CD4-positive, alpha-beta T cell (primary cell): ENCODE measurements at regions of chr6 and their contacts with region 1.

Region 1: GRCh38 chr6:52284460-52285176 is at the start of gene MCM3:
- DNase-seq: peak; percentile 86 to 99 (median 92)
- ATAC-seq: peak; percentile 92
- H3K4me3 ChIP-seq: peak within 1 kb of the TSS; percentile 57
- H3K4me3 Mint-ChIP-seq: peak within 1 kb of the TSS; percentile 60
- H3K27ac ChIP-seq: peak within 1 kb of the TSS; percentile 51 to 59
- H3K27ac Mint-ChIP-seq: peak within 1 kb of the TSS; percentile 34
- H3K4me1 ChIP-seq: peaks cover 29% of the 10 kb centered on the region
- H3K4me1 Mint-ChIP-seq: peaks cover 49% of the 10 kb centered on the region
- H3K27me3 ChIP-seq: no peaks in the 10 kb centered on the region
- H3K27me3 Mint-ChIP-seq: no peaks in the 10 kb centered on the region
- CTCF ChIP-seq: no peak
- total RNA-seq, gene MCM3: 9.3 to 10.1 TPM

Region 2: DNA sequence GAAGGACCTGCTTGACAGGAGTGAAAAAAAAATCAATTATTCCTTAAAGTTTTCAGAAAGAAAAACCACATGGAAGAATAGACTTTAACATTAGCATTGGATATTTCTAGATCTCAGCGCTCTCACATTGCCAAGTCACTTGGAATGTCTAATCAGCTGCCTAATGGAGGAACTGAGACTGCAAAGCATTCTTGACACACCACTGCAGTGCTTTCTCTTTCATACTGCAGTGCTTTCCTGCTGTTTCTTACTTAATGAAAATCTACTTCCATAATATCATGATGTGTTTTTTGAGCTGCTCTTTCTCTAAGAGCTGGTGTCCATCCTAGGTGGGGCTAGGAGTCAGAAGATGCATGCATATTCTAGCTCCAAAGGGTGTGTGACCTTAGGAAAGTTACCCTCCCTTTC is 20.4 kb after region 1 on chr6:
- CTCF ChIA-PET with region 1: interaction called, 7 read pairs
- POLR2A ChIA-PET with region 1: interaction called, 44 read pairs
- intact Hi-C with region 1: loop called (anchors 2 kb)
- DNase-seq: peak in 3 of 14 experiments; percentile 45 to 52 (median 46)
- ATAC-seq: peak; percentile 25
- H3K4me3 ChIP-seq: peak overlapping the region; percentile 10
- H3K4me3 Mint-ChIP-seq: peak overlapping the region; percentile 80
- H3K27ac ChIP-seq: peak overlapping the region; percentile 64 to 89
- H3K27ac Mint-ChIP-seq: peak overlapping the region; percentile 92
- H3K4me1 ChIP-seq: peaks cover 71% of the 10 kb centered on the region
- H3K4me1 Mint-ChIP-seq: peaks cover 80% of the 10 kb centered on the region
- H3K27me3 ChIP-seq: no peaks in the 10 kb centered on the region
- H3K27me3 Mint-ChIP-seq: no peaks in the 10 kb centered on the region
- CTCF ChIP-seq: no peak

Region 3: GRCh38 chr6:52361945-52362442 is 77.4 kb after region 1 on chr6 and contains the start of gene PAQR8:
- CTCF ChIA-PET with region 1: interaction called, 21 read pairs
- POLR2A ChIA-PET with region 1: interaction called, 110 read pairs
- intact Hi-C with region 1: loop called (anchors 2 to 5 kb)
- DNase-seq: peak; percentile 67 to 93 (median 78)
- ATAC-seq: peak; percentile 84
- H3K4me3 ChIP-seq: peak within 1 kb of the TSS; percentile 80
- H3K4me3 Mint-ChIP-seq: peak within 1 kb of the TSS; percentile 98
- H3K27ac ChIP-seq: peak within 1 kb of the TSS; percentile 81 to 88
- H3K27ac Mint-ChIP-seq: peak within 1 kb of the TSS; percentile 92
- H3K4me1 ChIP-seq: peaks cover 29% of the 10 kb centered on the region
- H3K4me1 Mint-ChIP-seq: peaks cover 53% of the 10 kb centered on the region
- H3K27me3 ChIP-seq: no peaks in the 10 kb centered on the region
- H3K27me3 Mint-ChIP-seq: no peaks in the 10 kb centered on the region
- CTCF ChIP-seq: no peak
- total RNA-seq, gene PAQR8: 1.8 to 1.9 TPM

Region 4: DNA sequence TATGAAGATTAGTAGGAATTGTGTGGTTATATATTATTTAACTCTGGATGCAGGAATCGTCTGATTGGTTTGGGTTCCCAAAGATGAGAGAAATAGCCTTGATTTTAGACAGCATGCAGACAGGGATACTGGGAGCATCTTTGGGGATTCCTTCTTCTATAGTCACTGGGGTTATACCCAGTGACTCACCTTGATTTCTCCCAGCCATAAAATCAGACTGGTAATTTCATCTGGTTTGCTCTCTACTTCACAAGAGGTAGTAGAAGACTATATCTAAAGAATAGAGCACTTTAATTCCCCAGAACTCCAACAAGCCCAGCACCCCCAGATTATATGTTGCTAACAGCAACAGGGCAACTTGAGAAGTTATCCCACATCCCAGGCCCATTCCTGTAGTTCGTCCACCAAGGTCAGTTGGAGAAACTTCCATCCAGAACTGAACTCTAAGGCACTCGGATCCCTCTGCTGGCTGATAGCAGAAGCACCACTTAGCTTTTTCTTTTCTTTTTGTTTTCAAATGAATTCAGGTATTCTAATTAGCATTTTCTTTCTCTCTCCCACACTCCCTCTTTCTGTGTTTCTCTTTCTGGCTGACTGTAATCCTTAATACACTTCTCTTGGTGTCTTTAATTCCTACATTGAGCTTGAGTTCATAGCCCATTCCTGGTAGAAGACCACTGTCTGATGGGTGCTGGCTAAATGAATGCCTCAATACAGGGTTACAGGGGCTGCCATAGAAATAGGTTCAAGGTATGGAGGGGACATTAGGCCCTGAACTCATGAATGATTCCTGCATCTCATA is 115.1 kb after region 1 on chr6:
- CTCF ChIA-PET with region 1: interaction called, 45 read pairs
- POLR2A ChIA-PET with region 1: interaction called, 101 read pairs
- intact Hi-C with region 1: loop called (anchors 1 kb)
- DNase-seq: peak in 5 of 14 experiments; percentile 34 to 75 (median 57)
- ATAC-seq: peak; percentile 43
- H3K4me3 ChIP-seq: no peak overlapping the region
- H3K4me3 Mint-ChIP-seq: peak overlapping the region; percentile 54
- H3K27ac ChIP-seq: peak overlapping the region; percentile 67 to 82
- H3K27ac Mint-ChIP-seq: peak overlapping the region; percentile 97
- H3K4me1 ChIP-seq: peaks cover 70% of the 10 kb centered on the region
- H3K4me1 Mint-ChIP-seq: peaks cover 80% of the 10 kb centered on the region
- H3K27me3 ChIP-seq: no peaks in the 10 kb centered on the region
- H3K27me3 Mint-ChIP-seq: no peaks in the 10 kb centered on the region
- CTCF ChIP-seq: peak; percentile 93

Region 5: GRCh38 chr6:52419809-52420670 is 135.4 kb after region 1 on chr6 and contains the start of gene EFHC1:
- CTCF ChIA-PET with region 1: interaction called, 13 read pairs
- POLR2A ChIA-PET with region 1: interaction called, 18 read pairs
- intact Hi-C with region 1: loop called (anchors 1 to 2 kb)
- DNase-seq: peak; percentile 95 to 99 (median 97)
- ATAC-seq: peak; percentile 88
- H3K4me3 ChIP-seq: peak within 1 kb of the TSS; percentile 80
- H3K4me3 Mint-ChIP-seq: no peak within 1 kb of the TSS
- H3K27ac ChIP-seq: peak within 1 kb of the TSS; percentile 33 to 57
- H3K27ac Mint-ChIP-seq: no peak within 1 kb of the TSS
- H3K4me1 ChIP-seq: peaks cover 23% of the 10 kb centered on the region
- H3K4me1 Mint-ChIP-seq: peaks cover 19% of the 10 kb centered on the region
- H3K27me3 ChIP-seq: no peaks in the 10 kb centered on the region
- H3K27me3 Mint-ChIP-seq: no peaks in the 10 kb centered on the region
- CTCF ChIP-seq: no peak
- total RNA-seq, gene EFHC1: 3.4 to 4.8 TPM

Region 6: DNA sequence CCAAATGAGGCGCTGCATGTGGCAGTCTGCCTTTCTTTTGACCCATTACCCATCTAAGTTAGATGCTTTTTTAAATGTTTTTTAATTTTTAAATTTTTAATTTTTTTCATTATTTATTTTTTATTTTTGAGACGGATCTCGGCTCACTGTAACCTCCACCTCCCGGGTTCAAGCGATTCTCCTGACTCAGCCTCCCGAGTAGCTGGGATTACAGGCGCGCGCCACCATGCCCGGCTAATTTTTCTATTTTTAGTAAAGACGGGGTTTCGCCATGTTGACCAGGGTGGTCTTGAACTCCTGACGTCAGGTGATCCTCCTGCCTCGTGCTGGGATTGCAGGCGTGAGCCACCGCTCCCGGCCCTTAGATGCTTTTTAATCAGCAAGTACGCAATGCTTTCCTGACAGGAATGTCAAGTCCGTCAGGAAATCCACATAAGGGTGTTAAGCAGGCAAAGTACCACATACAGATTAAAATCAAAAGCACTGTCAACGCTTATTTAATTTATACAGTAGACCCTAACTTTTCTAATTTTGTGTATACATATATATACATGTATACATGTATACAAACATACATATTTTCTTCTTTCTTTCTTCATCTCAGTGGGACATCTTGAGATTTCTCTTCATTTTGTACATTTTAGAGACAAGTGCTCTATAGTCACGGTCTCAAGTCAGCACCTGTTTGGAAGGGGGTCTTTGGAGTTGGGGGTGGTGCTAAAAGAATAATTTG is 711.5 kb after region 1 on chr6:
- CTCF ChIA-PET with region 1: no interaction called
- POLR2A ChIA-PET with region 1: interaction called, 3 read pairs
- intact Hi-C with region 1: loop called in 1 of 2 experiments (anchors 10 kb)
- DNase-seq: peak in 13 of 14 experiments; percentile 2 to 75 (median 27)
- ATAC-seq: peak; percentile 7
- H3K4me3 ChIP-seq: peak overlapping the region; percentile 74
- H3K4me3 Mint-ChIP-seq: peak overlapping the region; percentile 91
- H3K27ac ChIP-seq: no peak overlapping the region
- H3K27ac Mint-ChIP-seq: peak overlapping the region; percentile 100
- H3K4me1 ChIP-seq: peaks cover 15% of the 10 kb centered on the region
- H3K4me1 Mint-ChIP-seq: peaks cover 24% of the 10 kb centered on the region
- H3K27me3 ChIP-seq: no peaks in the 10 kb centered on the region
- H3K27me3 Mint-ChIP-seq: peaks cover 14% of the 10 kb centered on the region
- CTCF ChIP-seq: no peak

Region 7: DNA sequence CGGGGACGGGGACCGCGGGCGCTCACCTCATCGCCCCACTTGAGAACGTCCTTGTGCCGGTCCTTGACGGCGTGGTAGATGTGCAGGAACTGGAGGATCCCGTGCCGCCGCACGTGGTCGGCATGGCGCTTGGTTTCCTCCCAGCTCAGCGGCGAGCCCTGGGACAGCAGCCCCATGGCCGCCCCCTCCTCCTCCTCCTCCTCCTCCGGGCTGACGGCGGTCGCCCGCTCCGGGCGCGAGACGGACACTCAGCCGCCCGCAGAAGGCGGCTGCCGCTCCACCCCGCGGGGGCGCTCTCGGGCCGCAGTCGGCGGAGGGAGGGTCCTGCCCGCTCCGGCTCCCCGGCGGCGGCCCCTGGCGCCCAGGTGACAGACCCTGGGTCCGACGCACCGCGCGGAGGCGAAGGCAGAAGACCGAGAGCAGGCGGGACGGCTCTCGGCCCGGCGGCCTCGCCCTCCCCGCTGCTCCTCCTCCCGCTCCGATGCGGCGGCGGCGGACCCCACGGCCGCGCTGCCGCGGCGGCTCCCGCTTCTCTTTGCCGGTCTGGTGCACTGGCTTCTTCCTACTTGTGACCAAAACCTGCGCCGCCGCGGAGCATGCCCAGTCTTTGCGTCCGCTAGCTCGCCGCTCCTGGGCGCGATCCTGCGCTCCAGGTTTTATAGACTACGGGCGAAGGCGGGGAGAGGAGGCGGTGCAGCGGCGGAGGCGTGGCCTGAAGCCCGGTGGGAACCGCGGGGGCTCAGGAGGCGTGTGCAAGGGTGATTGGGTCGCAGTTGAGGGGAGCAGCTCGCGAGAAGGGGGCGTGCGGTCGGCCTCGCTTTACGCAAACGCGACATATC is 1260.1 kb after region 1 on chr6 and contains the start of gene GCLC:
- CTCF ChIA-PET with region 1: no interaction called
- POLR2A ChIA-PET with region 1: no interaction called
- intact Hi-C with region 1: loop called in 1 of 2 experiments (anchors 10 kb)
- DNase-seq: peak; percentile 71 to 95 (median 83)
- ATAC-seq: peak; percentile 60
- H3K4me3 ChIP-seq: peak within 1 kb of the TSS; percentile 54
- H3K4me3 Mint-ChIP-seq: peak within 1 kb of the TSS; percentile 99
- H3K27ac ChIP-seq: peak within 1 kb of the TSS in 1 of 2 donors; percentile 31
- H3K27ac Mint-ChIP-seq: peak within 1 kb of the TSS; percentile 69
- H3K4me1 ChIP-seq: peaks cover 43% of the 10 kb centered on the region
- H3K4me1 Mint-ChIP-seq: peaks cover 74% of the 10 kb centered on the region
- H3K27me3 ChIP-seq: no peaks in the 10 kb centered on the region
- H3K27me3 Mint-ChIP-seq: no peaks in the 10 kb centered on the region
- CTCF ChIP-seq: peak; percentile 67
- total RNA-seq, gene GCLC: 8.9 to 10.1 TPM